SK-N-SH (cell line): ENCODE measurements at regions of chr5 and their contacts with region 1.

Region 1: DNA sequence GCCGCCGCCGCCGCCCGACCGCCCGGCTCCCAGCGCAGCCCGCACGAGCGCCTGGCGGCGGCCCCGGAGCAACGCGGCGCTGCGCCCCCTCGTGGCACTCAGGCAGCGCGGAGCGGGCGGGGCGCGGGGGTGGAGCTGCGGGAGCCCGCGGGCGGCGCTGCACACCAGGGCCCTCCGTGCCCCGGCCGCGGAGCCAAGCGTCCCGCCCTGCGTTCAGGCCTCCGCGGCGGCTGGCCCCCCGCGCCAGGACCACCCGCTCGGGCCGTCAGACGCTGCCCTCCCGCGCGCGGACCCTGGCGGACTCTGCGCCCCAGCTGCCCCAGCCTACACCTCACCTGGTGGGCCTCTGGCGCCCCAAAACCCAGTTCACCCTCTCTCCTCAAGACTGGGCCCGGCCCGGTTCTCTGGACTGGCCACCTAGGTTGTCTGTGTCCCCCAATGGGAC is at the start of gene RASGEF1C:
- DNase-seq: peak; percentile 97
- H3K4me3 ChIP-seq: peak within 1 kb of the TSS; percentile 23 to 48; a peak in 3 of 4 replicates
- H3K27ac ChIP-seq: no peak within 1 kb of the TSS
- H3K4me1 ChIP-seq: peaks cover 0 to 19% of the 10 kb centered on the region in 2 experiments; a peak in 1 of 4 replicates
- H3K27me3 ChIP-seq: no peaks in the 10 kb centered on the region; the same call in 1 of the 2 replicates
- CTCF ChIP-seq: no peak
- EP300 ChIP-seq: no peak
- RAD21 ChIP-seq: peak; percentile 41
- polyA plus RNA-seq, gene RASGEF1C: not detected in 2 replicates

Region 2: GRCh38 chr5:180112181-180112861 is 96.8 kb before region 1 on chr5:
- CTCF ChIA-PET with region 1: no interaction called
- POLR2A ChIA-PET with region 1: no interaction called
- DNase-seq: peak; percentile 7
- H3K4me3 ChIP-seq: no peak overlapping the region
- H3K27ac ChIP-seq: no peak overlapping the region
- H3K4me1 ChIP-seq: no peaks in the 10 kb centered on the region
- H3K27me3 ChIP-seq: no peaks in the 10 kb centered on the region
- CTCF ChIP-seq: no peak
- EP300 ChIP-seq: no peak
- RAD21 ChIP-seq: no peak

Region 3: DNA sequence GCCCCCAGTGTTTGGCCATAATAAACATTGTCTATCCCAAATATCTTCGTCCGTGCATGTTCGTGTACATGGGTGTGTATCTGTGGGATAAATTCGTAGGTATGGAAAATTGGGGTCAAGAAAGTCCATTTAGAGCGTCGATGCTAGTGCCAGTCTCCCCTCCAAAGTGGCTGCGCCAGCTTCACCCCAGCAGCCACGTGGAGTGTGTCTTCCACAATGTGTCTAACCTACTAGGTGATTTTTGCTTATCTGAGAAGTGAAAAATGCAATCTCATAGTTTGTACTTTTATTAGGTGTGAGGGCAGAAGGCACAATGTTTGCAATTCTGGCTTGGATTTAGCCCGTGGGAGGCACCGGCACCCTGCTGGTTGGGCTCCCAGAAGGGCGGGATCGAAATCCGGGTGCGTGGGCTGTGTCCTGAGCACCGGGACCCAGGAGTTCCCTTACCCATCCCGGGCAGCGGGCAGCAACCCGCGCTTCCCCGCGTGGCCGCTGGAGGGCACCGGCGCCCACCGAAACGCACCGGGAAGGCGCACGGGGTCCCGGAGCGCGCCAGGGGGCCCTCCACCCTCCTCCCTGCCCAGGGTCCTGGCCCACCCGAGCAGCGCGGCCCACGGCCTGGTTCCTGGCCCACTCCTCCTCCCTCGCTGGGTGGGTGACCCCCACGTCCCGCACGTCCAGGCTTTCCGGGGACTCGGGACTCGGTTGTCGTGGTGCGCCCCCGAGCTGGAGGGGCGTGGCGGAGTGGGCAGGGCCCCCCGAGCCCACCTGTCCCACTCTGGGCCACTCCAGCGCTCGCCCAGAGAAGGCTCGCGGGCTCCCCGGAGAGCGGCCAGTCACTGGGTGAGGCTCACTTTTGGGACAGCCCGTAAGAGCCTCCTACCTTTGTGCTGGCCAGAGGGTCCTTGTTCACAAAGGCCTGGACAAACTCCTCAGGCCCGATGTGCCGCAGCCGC is 82.2 kb before region 1 on chr5:
- CTCF ChIA-PET with region 1: interaction called, 69 read pairs
- POLR2A ChIA-PET with region 1: no interaction called
- DNase-seq: peak; percentile 92
- H3K4me3 ChIP-seq: peak overlapping the region; percentile 27 to 41; a peak in 2 of 4 replicates
- H3K27ac ChIP-seq: no peak overlapping the region
- H3K4me1 ChIP-seq: peaks cover 0 to 6% of the 10 kb centered on the region in 2 experiments; a peak in 1 of 4 replicates
- H3K27me3 ChIP-seq: peaks cover 9% of the 10 kb centered on the region; the same call in 1 of the 2 replicates
- CTCF ChIP-seq: peak; percentile 74
- EP300 ChIP-seq: no peak
- RAD21 ChIP-seq: peak; percentile 80

Region 4: GRCh38 chr5:180161420-180162303 is 47.5 kb before region 1 on chr5:
- CTCF ChIA-PET with region 1: interaction called, 52 read pairs
- POLR2A ChIA-PET with region 1: no interaction called
- DNase-seq: peak; percentile 80
- H3K4me3 ChIP-seq: peak overlapping the region in 1 of 2 experiments; percentile 19; a peak in 1 of 4 replicates
- H3K27ac ChIP-seq: no peak overlapping the region
- H3K4me1 ChIP-seq: peaks cover 0 to 11% of the 10 kb centered on the region in 2 experiments; a peak in 1 of 4 replicates
- H3K27me3 ChIP-seq: no peaks in the 10 kb centered on the region
- CTCF ChIP-seq: no peak
- EP300 ChIP-seq: no peak
- RAD21 ChIP-seq: peak; percentile 66

Region 5: DNA sequence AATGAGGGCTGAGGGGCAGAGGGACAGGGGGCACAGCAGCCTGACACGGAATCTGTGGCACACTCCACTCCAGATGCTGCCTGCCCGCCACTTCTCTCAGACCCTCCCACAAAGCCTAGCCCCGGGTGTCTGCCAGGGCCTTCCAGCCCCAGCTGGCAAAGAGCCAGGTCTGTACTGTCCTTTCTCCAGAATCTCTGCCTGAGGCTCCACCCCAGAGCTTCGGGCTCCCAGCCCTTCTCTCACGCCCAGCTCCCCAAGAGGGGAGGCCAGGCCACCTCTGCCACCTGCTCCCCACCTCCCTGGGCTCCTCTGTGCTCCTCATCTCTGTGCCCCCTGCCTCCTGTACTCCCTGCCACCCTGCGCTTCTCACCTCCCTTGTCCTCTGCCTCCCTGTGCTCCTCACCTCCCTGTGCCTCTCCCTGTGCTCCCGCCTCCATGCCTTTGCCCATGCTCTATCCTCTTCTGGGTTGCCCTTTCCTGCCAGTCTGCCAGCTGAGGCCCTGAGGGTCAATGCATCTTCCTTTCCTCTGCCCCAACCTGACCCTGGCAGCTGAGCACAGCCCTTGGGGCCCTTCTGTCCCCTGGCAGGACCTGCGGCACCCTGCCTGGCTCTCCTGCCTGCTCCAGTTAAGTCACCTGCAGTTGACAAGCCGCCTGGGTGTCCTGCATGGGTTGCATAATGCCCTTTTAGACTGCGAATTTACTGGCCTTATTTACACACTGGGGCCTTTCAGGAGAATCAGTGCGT is 36.5 kb before region 1 on chr5:
- CTCF ChIA-PET with region 1: interaction called, 18 read pairs
- POLR2A ChIA-PET with region 1: no interaction called
- DNase-seq: peak; percentile 82
- H3K4me3 ChIP-seq: no peak overlapping the region
- H3K27ac ChIP-seq: peak overlapping the region in 1 of 2 experiments; percentile 6; a peak in 1 of 4 replicates
- H3K4me1 ChIP-seq: peaks cover 0 to 24% of the 10 kb centered on the region in 2 experiments; a peak in 1 of 4 replicates
- H3K27me3 ChIP-seq: no peaks in the 10 kb centered on the region
- CTCF ChIP-seq: no peak
- EP300 ChIP-seq: no peak
- RAD21 ChIP-seq: no peak

Region 6: GRCh38 chr5:180178531-180179441 is 30.4 kb before region 1 on chr5:
- CTCF ChIA-PET with region 1: interaction called, 16 read pairs
- POLR2A ChIA-PET with region 1: no interaction called
- DNase-seq: no peak
- H3K4me3 ChIP-seq: no peak overlapping the region
- H3K27ac ChIP-seq: no peak overlapping the region
- H3K4me1 ChIP-seq: peaks cover 0 to 24% of the 10 kb centered on the region in 2 experiments; a peak in 1 of 4 replicates
- H3K27me3 ChIP-seq: no peaks in the 10 kb centered on the region
- CTCF ChIP-seq: no peak
- EP300 ChIP-seq: no peak
- RAD21 ChIP-seq: no peak

Region 7: GRCh38 chr5:180233729-180234128 is 24.6 kb after region 1 on chr5:
- CTCF ChIA-PET with region 1: interaction called, 10 read pairs
- POLR2A ChIA-PET with region 1: no interaction called
- DNase-seq: no peak
- H3K4me3 ChIP-seq: no peak overlapping the region
- H3K27ac ChIP-seq: no peak overlapping the region
- H3K4me1 ChIP-seq: no peaks in the 10 kb centered on the region
- H3K27me3 ChIP-seq: no peaks in the 10 kb centered on the region
- CTCF ChIP-seq: no peak
- EP300 ChIP-seq: no peak
- RAD21 ChIP-seq: no peak

Region 8: DNA sequence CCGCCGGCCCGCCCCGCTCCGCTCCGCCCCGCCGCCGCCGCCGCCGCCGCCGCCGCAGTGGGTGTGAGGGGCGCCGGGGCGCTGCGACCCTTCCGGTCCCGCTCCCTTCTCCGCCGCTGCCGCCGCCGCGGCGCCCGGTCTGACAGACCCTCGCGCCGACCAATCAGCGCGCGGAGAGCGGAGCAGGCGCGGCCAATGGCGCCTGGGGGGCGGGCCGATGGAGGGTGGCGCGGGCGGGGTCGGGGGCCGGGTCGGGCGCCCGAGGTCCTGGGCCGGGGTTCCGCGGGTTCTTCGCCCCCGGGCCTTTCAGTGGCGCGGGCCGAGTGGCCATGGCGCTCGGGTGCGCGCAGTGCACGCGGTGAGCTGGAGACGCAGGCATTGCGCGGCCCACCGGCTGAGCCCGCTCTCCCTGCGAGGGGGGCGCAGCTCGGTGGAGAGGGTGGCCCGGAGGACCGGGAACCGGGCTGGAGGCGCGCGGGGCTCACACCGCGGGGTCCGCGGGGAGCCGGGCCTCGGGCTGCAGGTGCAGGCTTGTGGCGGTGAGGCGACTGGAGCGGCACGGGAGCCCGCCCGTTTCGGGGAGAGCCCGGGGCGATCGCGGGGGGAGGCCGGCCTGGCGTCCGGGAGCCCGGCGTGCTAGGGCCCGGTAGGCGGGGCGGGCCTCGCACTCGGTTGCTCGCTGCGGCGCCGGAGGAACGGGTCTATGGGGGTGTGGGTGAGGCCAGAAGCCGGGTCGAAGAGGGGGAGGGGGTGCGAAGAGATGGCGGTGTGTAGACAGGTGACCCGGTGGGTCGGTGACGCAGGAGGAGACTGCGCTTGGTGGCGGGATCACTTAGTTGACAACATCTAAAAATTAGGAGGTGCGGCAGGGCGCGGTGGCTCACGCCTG is 83.0 kb after region 1 on chr5 and contains the start of gene MAPK9:
- CTCF ChIA-PET with region 1: interaction called, 16 read pairs
- POLR2A ChIA-PET with region 1: no interaction called
- DNase-seq: peak; percentile 97
- H3K4me3 ChIP-seq: peak within 1 kb of the TSS; percentile 85 to 92
- H3K27ac ChIP-seq: peak within 1 kb of the TSS; percentile 47 to 81; a peak in 3 of 4 replicates
- H3K4me1 ChIP-seq: peaks cover 0 to 39% of the 10 kb centered on the region in 2 experiments; a peak in 2 of 4 replicates
- H3K27me3 ChIP-seq: no peaks in the 10 kb centered on the region
- CTCF ChIP-seq: peak; percentile 16; the same call in 1 of the 2 replicates
- EP300 ChIP-seq: no peak
- RAD21 ChIP-seq: no peak
- polyA plus RNA-seq, gene MAPK9: 23.9 and 26.2 TPM in 2 replicates